GM10248 (cell line): ENCODE measurements at regions of chr19 and their contacts with region 1.

Region 1: DNA sequence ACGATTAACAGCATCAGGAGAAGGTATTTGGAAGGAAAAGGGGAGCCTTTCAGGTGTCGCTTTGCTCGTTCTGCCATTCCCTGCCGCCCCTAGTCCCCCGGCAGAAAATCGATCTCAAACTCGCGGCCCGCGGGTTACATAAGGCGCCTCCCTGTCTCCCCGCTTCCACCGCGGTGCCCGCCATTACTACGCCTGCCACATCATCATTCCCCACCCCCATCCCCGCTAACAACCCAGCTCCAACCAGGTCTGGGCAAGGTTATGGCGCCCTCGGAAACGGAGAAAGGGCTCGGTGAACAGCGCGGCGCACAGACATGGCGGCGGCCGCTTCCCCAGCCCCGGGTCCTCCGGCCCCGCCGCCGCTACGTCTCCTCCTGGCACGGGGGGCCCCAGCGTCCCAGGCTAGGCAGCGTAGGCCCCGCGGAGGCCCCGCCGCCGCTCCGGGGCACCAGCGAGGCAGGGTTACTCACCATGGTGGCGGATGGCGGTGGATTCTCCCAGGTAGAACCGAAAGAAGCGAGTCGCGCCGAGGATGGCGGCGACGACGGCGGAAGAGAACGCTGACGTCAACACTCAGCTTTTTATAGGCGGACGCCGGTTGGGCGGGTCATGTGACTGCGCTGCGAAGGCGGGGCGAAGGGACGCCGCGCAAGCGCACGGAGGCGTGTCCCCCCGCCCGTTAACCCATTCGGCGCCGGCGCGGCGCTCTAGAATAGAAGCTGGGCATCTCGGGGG is at the start of gene EEF2:
- DNase-seq: peak; percentile 93
- CTCF ChIP-seq: no peak

Region 2: GRCh38 chr19:4007021-4007835 is 22.2 kb after region 1 on chr19 and contains the start of gene PIAS4:
- CTCF ChIA-PET with region 1: interaction called, 17 read pairs
- POLR2A ChIA-PET with region 1: interaction called, 4 read pairs
- DNase-seq: peak; percentile 100
- CTCF ChIP-seq: no peak